CD8-positive, alpha-beta T cell (primary cell): ENCODE measurements at regions of chr9 and their contacts with region 1.

Region 1: GRCh38 chr9:92963831-92964626 is 16.7 kb downstream of the FGD3 start:
- DNase-seq: peak; percentile 64 to 94 (median 82)
- ATAC-seq: peak; percentile 74
- H3K4me3 ChIP-seq: peak overlapping the region; percentile 59 to 81
- H3K4me3 Mint-ChIP-seq: peak overlapping the region; percentile 91
- H3K27ac ChIP-seq: peak overlapping the region; percentile 91 to 94
- H3K27ac Mint-ChIP-seq: peak overlapping the region; percentile 100
- H3K4me1 ChIP-seq: peaks cover 62% of the 10 kb centered on the region
- H3K4me1 Mint-ChIP-seq: peaks cover 60% of the 10 kb centered on the region
- H3K27me3 ChIP-seq: no peaks in the 10 kb centered on the region
- H3K27me3 Mint-ChIP-seq: no peaks in the 10 kb centered on the region
- CTCF ChIP-seq: no peak

Region 2: DNA sequence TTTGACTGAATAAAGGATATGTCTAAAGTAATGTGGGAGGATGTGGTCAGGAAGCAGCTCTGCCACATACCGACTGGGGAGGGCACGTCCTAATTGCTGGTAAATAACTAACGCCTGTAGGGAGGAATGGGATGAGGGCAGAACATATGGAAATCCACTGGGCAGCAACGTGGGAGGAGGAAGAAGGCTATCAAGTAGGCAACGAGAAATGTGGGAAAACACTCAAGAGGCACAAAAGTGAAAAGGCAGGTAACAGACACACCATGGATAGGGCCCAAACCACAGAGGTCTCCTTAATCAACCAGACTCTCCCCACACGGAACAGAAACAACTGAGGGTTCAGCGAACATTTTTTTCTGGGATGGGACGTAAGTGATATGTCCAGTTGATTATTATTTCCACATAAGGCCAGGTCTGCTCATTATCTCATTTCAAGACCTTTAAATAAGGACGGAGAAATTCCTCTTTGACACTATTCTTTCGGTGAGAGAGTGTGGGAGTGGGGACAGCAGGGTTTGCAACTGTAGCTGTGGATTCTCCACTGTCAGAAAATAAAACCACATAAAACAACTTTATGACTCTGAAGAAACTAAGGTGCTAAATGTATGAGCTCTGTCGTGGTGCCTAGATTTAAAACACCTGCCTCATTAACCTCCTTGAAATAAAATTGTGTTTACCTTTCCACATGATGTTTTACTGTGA is 687.5 kb before region 1 on chr9:
- CTCF ChIA-PET with region 1: no interaction called
- POLR2A ChIA-PET with region 1: no interaction called
- intact Hi-C with region 1: no loop called
- DNase-seq: peak in 1 of 9 experiments; percentile 39
- ATAC-seq: peak; percentile 46
- H3K4me3 ChIP-seq: no peak overlapping the region
- H3K4me3 Mint-ChIP-seq: peak overlapping the region; percentile 50
- H3K27ac ChIP-seq: peak overlapping the region in 1 of 2 experiments; percentile 23
- H3K27ac Mint-ChIP-seq: peak overlapping the region; percentile 85
- H3K4me1 ChIP-seq: peaks cover 13% of the 10 kb centered on the region
- H3K4me1 Mint-ChIP-seq: peaks cover 18% of the 10 kb centered on the region
- H3K27me3 ChIP-seq: no peaks in the 10 kb centered on the region
- H3K27me3 Mint-ChIP-seq: no peaks in the 10 kb centered on the region
- CTCF ChIP-seq: no peak

Region 3: DNA sequence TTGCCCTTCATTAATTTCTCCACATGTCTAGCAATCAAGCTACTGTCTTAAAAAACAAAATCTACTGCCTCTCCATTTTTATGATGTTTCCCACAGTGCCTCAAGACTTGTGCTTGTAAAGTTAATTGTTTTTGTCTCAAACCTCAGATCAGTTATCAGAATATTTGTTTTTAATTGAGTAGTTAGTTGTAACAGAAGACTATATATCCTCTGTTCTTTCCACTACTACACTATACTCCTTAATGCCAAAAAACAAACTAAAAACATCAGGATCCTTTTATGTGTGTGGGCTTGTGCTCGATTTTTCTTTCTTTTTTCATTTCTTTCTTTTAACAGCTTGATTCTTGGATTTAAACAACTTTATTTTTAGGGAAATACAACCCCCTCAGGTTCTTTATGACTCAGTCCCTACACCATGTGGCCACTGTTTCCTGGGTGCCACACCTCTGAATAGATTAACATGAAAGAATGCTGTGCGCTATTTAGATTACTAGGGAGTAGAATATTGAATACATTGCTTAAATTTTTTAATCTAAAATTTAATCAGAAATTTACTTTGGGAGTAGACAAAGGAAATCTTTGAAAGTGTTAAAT is 482.9 kb before region 1 on chr9:
- CTCF ChIA-PET with region 1: no interaction called
- POLR2A ChIA-PET with region 1: no interaction called
- intact Hi-C with region 1: no loop called
- DNase-seq: no peak
- ATAC-seq: no peak
- H3K4me3 ChIP-seq: no peak overlapping the region
- H3K4me3 Mint-ChIP-seq: no peak overlapping the region
- H3K27ac ChIP-seq: no peak overlapping the region
- H3K27ac Mint-ChIP-seq: no peak overlapping the region
- H3K4me1 ChIP-seq: no peaks in the 10 kb centered on the region
- H3K4me1 Mint-ChIP-seq: peaks cover 2% of the 10 kb centered on the region
- H3K27me3 ChIP-seq: no peaks in the 10 kb centered on the region
- H3K27me3 Mint-ChIP-seq: no peaks in the 10 kb centered on the region
- CTCF ChIP-seq: no peak

Region 4: DNA sequence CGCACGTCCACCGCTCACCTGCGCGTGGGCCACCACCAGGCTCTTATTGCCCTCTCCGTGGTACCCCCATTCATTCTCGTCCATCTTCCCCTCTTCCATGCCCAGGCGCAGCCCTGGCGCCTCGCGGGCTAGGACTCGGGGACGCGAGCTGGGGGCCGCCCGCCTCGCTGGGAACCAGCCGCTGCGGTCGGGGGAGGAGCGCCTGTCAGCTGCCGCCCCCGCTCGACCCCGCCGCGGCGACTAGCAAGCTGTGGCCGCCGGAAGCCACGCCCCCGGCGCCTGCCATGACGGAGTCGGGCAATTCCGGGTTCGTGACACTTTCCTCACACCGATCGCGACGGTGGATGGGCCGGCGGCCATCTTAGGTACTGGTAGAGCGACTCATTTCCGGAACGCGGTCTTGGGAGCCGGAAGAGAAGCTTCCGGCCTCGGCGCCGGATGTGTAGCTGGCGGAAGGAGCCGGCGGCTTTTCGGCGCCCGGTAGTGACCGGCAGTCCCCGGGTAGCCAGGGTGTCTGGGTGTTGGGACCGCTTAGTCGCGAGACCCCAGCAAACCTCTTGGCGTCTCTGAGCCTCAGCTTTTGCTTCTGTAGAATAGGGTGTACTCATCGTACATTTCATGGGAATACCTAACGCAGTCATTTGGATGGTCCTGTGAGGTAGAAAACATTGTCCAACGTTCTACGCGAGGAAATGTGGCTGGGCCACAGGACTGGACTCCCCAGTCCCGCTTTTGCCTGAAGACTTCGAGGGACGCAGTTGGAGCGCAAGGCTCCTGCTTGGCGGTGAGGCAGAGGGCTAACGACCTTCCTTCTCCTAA is 293.9 kb before region 1 on chr9 and contains the start of gene IPPK:
- CTCF ChIA-PET with region 1: no interaction called
- POLR2A ChIA-PET with region 1: interaction called, 3 read pairs
- intact Hi-C with region 1: loop called in 1 of 2 experiments (anchors 10 kb)
- DNase-seq: peak; percentile 93 to 99 (median 96)
- ATAC-seq: peak; percentile 93
- H3K4me3 ChIP-seq: peak within 1 kb of the TSS; percentile 87 to 98
- H3K4me3 Mint-ChIP-seq: peak within 1 kb of the TSS; percentile 96
- H3K27ac ChIP-seq: peak within 1 kb of the TSS; percentile 96
- H3K27ac Mint-ChIP-seq: peak within 1 kb of the TSS; percentile 98
- H3K4me1 ChIP-seq: peaks cover 23% of the 10 kb centered on the region
- H3K4me1 Mint-ChIP-seq: peaks cover 39% of the 10 kb centered on the region
- H3K27me3 ChIP-seq: no peaks in the 10 kb centered on the region
- H3K27me3 Mint-ChIP-seq: no peaks in the 10 kb centered on the region
- CTCF ChIP-seq: no peak
- total RNA-seq, gene IPPK: 12.2 to 12.8 TPM

Region 5: DNA sequence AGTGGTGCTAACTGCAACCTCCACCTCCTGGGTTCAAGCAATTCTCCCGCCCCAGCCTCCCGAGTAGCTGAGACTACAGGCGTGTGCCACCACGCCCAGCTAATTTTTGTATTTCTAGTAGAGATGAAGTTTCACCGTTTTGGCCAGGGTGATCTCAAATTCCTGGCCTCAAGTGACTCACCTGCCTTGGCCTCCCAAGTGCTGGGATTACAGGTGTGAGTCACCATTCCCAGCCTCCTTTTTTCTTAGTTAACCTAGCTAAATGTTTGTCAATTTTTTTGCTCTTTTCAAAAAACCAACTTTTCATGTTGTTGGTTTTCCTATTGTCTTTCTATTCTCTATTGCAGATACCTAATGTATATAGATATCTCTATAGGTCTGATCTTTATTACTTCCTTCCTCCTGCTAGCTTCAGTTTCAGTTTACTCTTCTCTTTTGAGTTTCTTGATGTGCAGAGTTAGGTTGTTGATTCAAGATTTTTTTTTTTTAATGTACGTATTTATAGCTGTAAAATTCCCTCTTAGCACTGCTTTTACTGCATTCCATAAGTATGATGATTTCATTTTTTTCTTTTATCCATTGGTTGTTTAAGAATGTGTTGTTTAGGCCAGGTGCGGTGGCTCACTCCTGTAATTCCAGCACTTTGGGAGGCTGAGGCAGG is 16.2 kb after region 1 on chr9:
- CTCF ChIA-PET with region 1: interaction called, 10 read pairs
- POLR2A ChIA-PET with region 1: interaction called, 25 read pairs
- intact Hi-C with region 1: loop called in 1 of 2 experiments (anchors 2 kb)
- DNase-seq: no peak
- ATAC-seq: peak; percentile 47
- H3K4me3 ChIP-seq: no peak overlapping the region
- H3K4me3 Mint-ChIP-seq: peak overlapping the region; percentile 38
- H3K27ac ChIP-seq: peak overlapping the region in 1 of 2 experiments; percentile 17
- H3K27ac Mint-ChIP-seq: peak overlapping the region; percentile 90
- H3K4me1 ChIP-seq: peaks cover 65% of the 10 kb centered on the region
- H3K4me1 Mint-ChIP-seq: peaks cover 69% of the 10 kb centered on the region
- H3K27me3 ChIP-seq: no peaks in the 10 kb centered on the region
- H3K27me3 Mint-ChIP-seq: no peaks in the 10 kb centered on the region
- CTCF ChIP-seq: no peak

Region 6: DNA sequence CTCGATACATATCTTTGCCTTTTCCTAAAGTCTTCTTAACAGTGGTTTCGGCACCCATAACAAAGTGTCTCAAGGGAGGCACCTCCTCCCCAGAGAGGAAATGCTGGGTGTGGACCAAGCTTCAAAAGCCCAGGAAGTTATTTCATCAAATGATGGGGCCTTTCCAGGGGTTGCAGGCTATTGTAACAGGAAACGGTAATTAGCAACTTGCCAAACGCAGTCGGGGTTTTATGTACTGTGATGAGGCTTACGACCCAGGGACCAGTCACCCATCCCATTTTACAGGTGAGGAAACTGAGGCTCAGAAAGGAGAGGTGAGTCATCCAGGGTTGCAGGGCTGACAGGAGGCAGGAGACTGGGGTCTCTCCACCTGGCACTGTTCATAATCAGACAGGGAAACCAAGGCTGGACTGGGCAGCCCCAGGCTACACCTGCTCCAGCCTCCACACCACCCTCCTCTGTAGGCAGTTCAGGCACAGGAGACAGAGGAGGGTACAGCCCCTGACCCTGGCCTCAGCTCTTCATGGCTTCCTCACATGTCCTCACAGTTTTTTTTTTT is 64.5 kb after region 1 on chr9:
- CTCF ChIA-PET with region 1: interaction called, 3 read pairs
- POLR2A ChIA-PET with region 1: interaction called, 16 read pairs
- intact Hi-C with region 1: loop called in 1 of 2 experiments (anchors 1 kb)
- DNase-seq: peak; percentile 44 to 94 (median 74)
- ATAC-seq: peak; percentile 83
- H3K4me3 ChIP-seq: peak overlapping the region; percentile 21 to 35
- H3K4me3 Mint-ChIP-seq: peak overlapping the region; percentile 72
- H3K27ac ChIP-seq: peak overlapping the region; percentile 78 to 86
- H3K27ac Mint-ChIP-seq: peak overlapping the region; percentile 97
- H3K4me1 ChIP-seq: peaks cover 91% of the 10 kb centered on the region
- H3K4me1 Mint-ChIP-seq: peaks cover 86% of the 10 kb centered on the region
- H3K27me3 ChIP-seq: no peaks in the 10 kb centered on the region
- H3K27me3 Mint-ChIP-seq: no peaks in the 10 kb centered on the region
- CTCF ChIP-seq: no peak

Region 7: GRCh38 chr9:93453047-93453914 is 489.3 kb after region 1 on chr9 and contains the start of gene FAM120AOS:
- CTCF ChIA-PET with region 1: no interaction called
- POLR2A ChIA-PET with region 1: interaction called, 5 read pairs
- intact Hi-C with region 1: loop called in 1 of 2 experiments (anchors 1 kb)
- DNase-seq: peak; percentile 59 to 95 (median 85)
- ATAC-seq: peak; percentile 74
- H3K4me3 ChIP-seq: peak within 1 kb of the TSS; percentile 63 to 88
- H3K4me3 Mint-ChIP-seq: peak within 1 kb of the TSS; percentile 90
- H3K27ac ChIP-seq: peak within 1 kb of the TSS; percentile 49 to 68
- H3K27ac Mint-ChIP-seq: peak within 1 kb of the TSS; percentile 95
- H3K4me1 ChIP-seq: peaks cover 27% of the 10 kb centered on the region
- H3K4me1 Mint-ChIP-seq: peaks cover 60% of the 10 kb centered on the region
- H3K27me3 ChIP-seq: no peaks in the 10 kb centered on the region
- H3K27me3 Mint-ChIP-seq: no peaks in the 10 kb centered on the region
- CTCF ChIP-seq: no peak
- total RNA-seq, gene FAM120AOS: 40.3 to 40.7 TPM